ENCODE measurements at regions of chr4 and their contacts with region 1.

Region 1: DNA sequence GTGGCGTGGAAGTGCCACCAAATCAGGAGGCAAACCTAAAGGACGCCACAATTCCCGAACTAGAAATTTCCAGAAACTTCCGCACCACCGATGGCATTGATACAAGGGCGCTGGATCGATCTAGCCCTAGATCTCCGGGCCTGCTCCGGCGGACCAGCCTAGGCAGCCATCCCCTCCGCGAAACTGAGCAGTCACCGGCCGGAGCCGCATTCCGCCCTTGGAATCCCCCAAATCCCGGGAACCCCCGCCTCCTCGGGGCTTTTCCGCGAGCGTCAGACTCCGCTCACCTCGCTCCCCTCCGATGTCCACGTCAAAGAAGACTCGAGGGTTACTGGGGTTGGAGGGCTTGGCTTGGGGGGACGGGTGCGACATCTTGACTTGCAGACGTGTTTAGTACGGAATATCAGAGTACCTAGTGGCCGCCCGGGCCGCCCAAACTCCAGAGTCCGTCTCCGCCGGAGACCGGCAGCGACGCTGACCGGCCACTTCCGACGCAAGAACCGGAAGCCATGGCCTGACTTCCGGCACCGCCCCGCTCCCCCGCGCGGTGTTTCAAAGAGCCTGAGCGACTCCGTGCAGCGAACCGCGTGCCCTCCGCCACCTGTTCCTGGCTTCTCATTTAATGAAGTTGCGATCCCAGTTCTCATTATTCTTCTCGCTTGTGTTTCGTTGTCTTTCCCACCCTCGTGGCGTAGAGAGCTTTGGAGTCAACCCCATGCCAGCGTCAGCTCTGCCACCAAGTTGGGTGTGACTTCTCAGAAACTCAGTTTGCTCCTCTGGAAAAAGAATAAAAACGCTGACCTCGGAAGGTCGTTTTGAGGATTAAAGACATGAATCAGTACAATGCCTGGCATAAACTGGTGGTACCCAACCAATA is at the start of gene PPID:
- DNase-seq: peak; percentile 93
- ATAC-seq: peak; percentile 86
- H3K4me3 Mint-ChIP-seq: peak within 1 kb of the TSS; percentile 99
- H3K27ac Mint-ChIP-seq: peak within 1 kb of the TSS; percentile 100
- H3K4me1 Mint-ChIP-seq: peaks cover 46% of the 10 kb centered on the region
- H3K27me3 Mint-ChIP-seq: peaks cover 4% of the 10 kb centered on the region
- total RNA-seq, gene PPID: 72.0 to 78.1 TPM

Region 2: GRCh38 chr4:158652920-158653319 is 70.2 kb before region 1 on chr4:
- CTCF ChIA-PET with region 1: no interaction called
- POLR2A ChIA-PET with region 1: no interaction called
- intact Hi-C with region 1: no loop called
- DNase-seq: no peak
- ATAC-seq: no peak
- H3K4me3 Mint-ChIP-seq: no peak overlapping the region
- H3K27ac Mint-ChIP-seq: no peak overlapping the region
- H3K4me1 Mint-ChIP-seq: peaks cover 7% of the 10 kb centered on the region
- H3K27me3 Mint-ChIP-seq: no peaks in the 10 kb centered on the region

Region 3: GRCh38 chr4:158671915-158672806 is 51.0 kb before region 1 on chr4 and contains the start of gene ETFDH:
- CTCF ChIA-PET with region 1: interaction called, 3 read pairs
- POLR2A ChIA-PET with region 1: interaction called, 3 read pairs
- intact Hi-C with region 1: loop called (anchors 1 kb)
- DNase-seq: peak; percentile 98
- ATAC-seq: peak; percentile 88
- H3K4me3 Mint-ChIP-seq: peak within 1 kb of the TSS; percentile 97
- H3K27ac Mint-ChIP-seq: peak within 1 kb of the TSS; percentile 97
- H3K4me1 Mint-ChIP-seq: peaks cover 18% of the 10 kb centered on the region
- H3K27me3 Mint-ChIP-seq: no peaks in the 10 kb centered on the region
- total RNA-seq, gene ETFDH: 39.5 to 46.9 TPM

Region 4: GRCh38 chr4:158809611-158810486 is 86.7 kb after region 1 on chr4:
- CTCF ChIA-PET with region 1: no interaction called
- POLR2A ChIA-PET with region 1: no interaction called
- intact Hi-C with region 1: loop called (anchors 1 to 5 kb)
- DNase-seq: no peak
- ATAC-seq: peak; percentile 81
- H3K4me3 Mint-ChIP-seq: peak overlapping the region; percentile 28
- H3K27ac Mint-ChIP-seq: peak overlapping the region; percentile 71
- H3K4me1 Mint-ChIP-seq: peaks cover 35% of the 10 kb centered on the region
- H3K27me3 Mint-ChIP-seq: no peaks in the 10 kb centered on the region

Region 5: GRCh38 chr4:159077702-159078495 is 354.7 kb after region 1 on chr4:
- CTCF ChIA-PET with region 1: no interaction called
- POLR2A ChIA-PET with region 1: no interaction called
- intact Hi-C with region 1: loop called in 1 of 2 experiments (anchors 10 kb)
- DNase-seq: no peak
- ATAC-seq: peak; percentile 84
- H3K4me3 Mint-ChIP-seq: peak overlapping the region; percentile 21
- H3K27ac Mint-ChIP-seq: peak overlapping the region; percentile 47
- H3K4me1 Mint-ChIP-seq: peaks cover 25% of the 10 kb centered on the region
- H3K27me3 Mint-ChIP-seq: no peaks in the 10 kb centered on the region

Region 6: DNA sequence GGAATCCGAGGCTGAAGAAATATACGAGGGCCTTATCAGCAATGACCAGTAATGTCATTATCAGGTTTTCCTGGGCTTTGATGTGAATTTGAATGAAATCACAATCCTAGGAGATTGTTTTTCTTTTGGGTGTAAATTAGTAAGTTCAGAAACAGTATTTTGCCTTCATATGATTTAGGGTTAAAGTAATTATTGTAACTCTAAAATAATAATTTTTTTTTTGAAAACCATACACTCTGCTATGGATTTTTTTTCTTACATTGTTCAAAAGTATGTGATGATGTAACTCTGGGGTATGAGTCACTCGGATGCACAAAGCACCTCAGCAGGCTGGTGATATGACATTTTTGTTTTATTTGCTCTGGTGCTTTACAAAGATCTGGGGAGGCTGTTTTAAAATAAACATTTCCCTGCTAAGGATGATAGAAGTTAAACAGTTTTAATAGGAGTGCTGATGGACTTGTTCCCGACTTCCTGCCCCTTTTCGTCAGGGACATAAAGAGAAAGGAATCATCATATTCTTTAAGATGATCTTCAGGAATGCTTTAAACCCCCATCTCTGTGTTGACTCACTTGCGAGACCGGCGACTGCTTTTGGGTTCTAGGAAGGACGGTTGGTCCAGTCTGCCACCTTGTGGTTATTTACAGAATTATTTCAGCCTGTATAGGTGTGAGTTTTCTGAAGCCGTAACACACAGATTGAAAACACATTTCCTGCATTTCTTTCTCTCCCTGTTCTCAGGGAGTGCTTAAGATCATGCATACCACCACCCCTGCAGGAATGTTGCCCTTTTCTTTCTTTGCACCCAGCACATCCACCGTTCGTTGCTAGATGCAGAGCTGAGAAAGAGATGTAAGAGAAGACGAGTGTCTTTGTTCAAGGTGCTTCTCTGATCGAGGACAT is 452.2 kb after region 1 on chr4:
- CTCF ChIA-PET with region 1: interaction called, 3 read pairs
- POLR2A ChIA-PET with region 1: no interaction called
- intact Hi-C with region 1: loop called in 1 of 2 experiments (anchors 2 kb)
- DNase-seq: peak; percentile 71
- ATAC-seq: peak; percentile 69
- H3K4me3 Mint-ChIP-seq: no peak overlapping the region
- H3K27ac Mint-ChIP-seq: no peak overlapping the region
- H3K4me1 Mint-ChIP-seq: peaks cover 68% of the 10 kb centered on the region
- H3K27me3 Mint-ChIP-seq: no peaks in the 10 kb centered on the region

Region 7: GRCh38 chr4:159446266-159446976 is 723.3 kb after region 1 on chr4:
- CTCF ChIA-PET with region 1: no interaction called
- POLR2A ChIA-PET with region 1: no interaction called
- intact Hi-C with region 1: loop called in 1 of 2 experiments (anchors 5 kb)
- DNase-seq: peak; percentile 43
- ATAC-seq: peak; percentile 94
- H3K4me3 Mint-ChIP-seq: no peak overlapping the region
- H3K27ac Mint-ChIP-seq: no peak overlapping the region
- H3K4me1 Mint-ChIP-seq: no peaks in the 10 kb centered on the region
- H3K27me3 Mint-ChIP-seq: peaks cover 14% of the 10 kb centered on the region